Body of pancreas (tissue), 4 donors: ENCODE measurements at regions of chr12 and their contacts with region 1.

Region 1: GRCh38 chr12:42023733-42024494 is 120.8 kb downstream of the GXYLT1 start:
- DNase-seq: peak; percentile 69 to 75 (median 72)
- ATAC-seq: peak; percentile 87
- H3K4me3 ChIP-seq: no peak overlapping the region
- H3K27ac ChIP-seq: no peak overlapping the region
- H3K4me1 ChIP-seq: no peaks in the 10 kb centered on the region
- H3K27me3 ChIP-seq: no peaks in the 10 kb centered on the region
- CTCF ChIP-seq: peak; percentile 62 to 86 (median 82)
- POLR2A ChIP-seq: no peak

Region 2: DNA sequence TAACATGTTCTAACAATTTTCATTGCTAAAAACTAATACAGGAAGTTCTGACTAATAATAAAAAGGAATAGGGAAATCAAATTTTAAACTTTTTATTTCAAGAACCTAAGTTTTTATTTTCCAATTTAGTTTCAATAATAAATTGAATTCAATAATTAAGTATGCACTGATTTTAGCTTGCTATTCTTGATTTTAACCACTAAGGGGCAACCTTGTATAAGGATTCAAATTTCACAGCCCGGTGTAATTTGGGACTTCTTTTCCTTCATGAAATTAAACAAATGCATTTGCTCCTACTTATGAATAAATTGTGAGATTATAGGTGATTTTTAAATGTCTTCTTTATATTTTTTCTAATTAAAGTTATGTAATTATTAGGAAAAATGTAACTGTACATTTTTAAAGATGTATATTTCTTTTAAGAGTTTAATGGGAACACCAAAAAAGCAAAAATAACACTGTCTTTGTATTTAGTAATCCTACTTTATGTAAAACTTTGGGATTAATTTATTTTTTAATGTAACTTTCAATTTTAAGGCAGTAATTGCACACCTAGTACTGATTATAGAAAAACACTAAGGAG is 1077.2 kb before region 1 on chr12:
- intact Hi-C with region 1: loop called (anchors 10 kb)
- DNase-seq: no peak
- ATAC-seq: no peak
- H3K4me3 ChIP-seq: no peak overlapping the region
- H3K27ac ChIP-seq: no peak overlapping the region
- H3K4me1 ChIP-seq: no peaks in the 10 kb centered on the region
- H3K27me3 ChIP-seq: no peaks in the 10 kb centered on the region
- CTCF ChIP-seq: peak; percentile 23 to 71 (median 61)
- POLR2A ChIP-seq: no peak

Region 3: DNA sequence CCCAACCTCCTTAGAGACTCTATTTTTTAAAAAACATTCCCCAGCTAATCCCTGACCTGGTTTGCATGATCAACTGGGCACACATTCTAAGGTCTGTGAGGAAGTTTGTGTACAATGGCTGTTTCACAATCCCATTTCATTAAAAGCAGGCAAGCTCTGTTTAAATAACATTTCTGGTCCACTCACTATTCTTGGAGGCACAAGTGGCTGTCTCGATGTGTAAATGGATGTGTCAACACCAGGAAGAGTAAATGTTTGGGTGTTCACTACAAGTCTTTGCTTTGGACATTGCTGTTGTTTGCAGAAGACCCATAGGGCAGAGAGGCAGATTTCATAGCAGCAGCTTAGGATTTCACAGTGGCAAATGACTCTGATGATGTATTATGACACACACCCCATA is 737.5 kb before region 1 on chr12:
- intact Hi-C with region 1: no loop called
- DNase-seq: no peak
- ATAC-seq: no peak
- H3K4me3 ChIP-seq: no peak overlapping the region
- H3K27ac ChIP-seq: no peak overlapping the region
- H3K4me1 ChIP-seq: no peaks in the 10 kb centered on the region
- H3K27me3 ChIP-seq: no peaks in the 10 kb centered on the region
- CTCF ChIP-seq: no peak
- POLR2A ChIP-seq: no peak

Region 4: DNA sequence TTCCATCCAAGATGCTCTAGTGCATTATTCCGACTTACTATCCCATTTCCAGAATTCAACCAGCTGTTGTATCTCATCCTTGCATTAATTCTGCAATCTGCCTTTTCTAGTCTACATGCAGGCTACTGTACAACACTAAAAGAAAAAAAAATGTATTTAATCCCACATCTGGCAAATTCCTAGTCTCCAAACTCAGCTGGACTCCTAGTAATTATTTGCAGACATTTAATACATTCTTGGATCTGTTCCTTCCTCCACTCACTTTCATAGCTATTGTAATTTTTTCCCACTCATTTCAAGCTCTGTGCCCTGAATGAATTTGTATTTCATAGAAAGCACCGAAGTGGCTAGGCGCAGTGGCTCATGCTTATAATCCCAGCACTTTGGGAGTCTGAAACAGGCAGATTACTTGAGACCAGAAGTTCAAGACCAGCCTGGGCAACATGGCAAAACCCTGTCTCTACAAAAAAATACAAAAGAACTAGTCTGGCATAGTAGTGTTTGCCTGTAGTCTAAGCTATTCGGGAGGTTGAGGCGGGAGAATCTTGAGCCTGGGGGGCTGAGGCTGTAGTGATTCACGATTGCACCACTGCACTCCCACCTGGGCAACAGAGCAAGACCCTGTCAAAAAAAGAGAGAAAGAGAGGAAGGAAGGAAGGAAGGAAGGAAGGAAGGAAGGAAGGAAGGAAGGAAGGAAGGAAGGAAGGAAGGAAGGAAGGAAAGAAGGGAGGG is 253.6 kb after region 1 on chr12:
- intact Hi-C with region 1: no loop called
- DNase-seq: no peak
- ATAC-seq: no peak
- H3K4me3 ChIP-seq: no peak overlapping the region
- H3K27ac ChIP-seq: no peak overlapping the region
- H3K4me1 ChIP-seq: peaks cover 7% of the 10 kb centered on the region
- H3K27me3 ChIP-seq: no peaks in the 10 kb centered on the region
- CTCF ChIP-seq: no peak
- POLR2A ChIP-seq: no peak

Region 5: GRCh38 chr12:42407306-42407705 is 383.4 kb after region 1 on chr12:
- intact Hi-C with region 1: no loop called
- DNase-seq: no peak
- ATAC-seq: no peak
- H3K4me3 ChIP-seq: no peak overlapping the region
- H3K27ac ChIP-seq: peak overlapping the region in 1 of 4 donors; percentile 12
- H3K4me1 ChIP-seq: no peaks in the 10 kb centered on the region
- H3K27me3 ChIP-seq: no peaks in the 10 kb centered on the region
- CTCF ChIP-seq: no peak
- POLR2A ChIP-seq: no peak

Region 6: GRCh38 chr12:42539696-42540095 is 515.8 kb after region 1 on chr12:
- intact Hi-C with region 1: no loop called
- DNase-seq: no peak
- ATAC-seq: no peak
- H3K4me3 ChIP-seq: no peak overlapping the region
- H3K27ac ChIP-seq: no peak overlapping the region
- H3K4me1 ChIP-seq: no peaks in the 10 kb centered on the region
- H3K27me3 ChIP-seq: no peaks in the 10 kb centered on the region
- CTCF ChIP-seq: no peak
- POLR2A ChIP-seq: no peak